ENCODE measurements at regions of chr18 and their contacts with region 1.

Region 1: DNA sequence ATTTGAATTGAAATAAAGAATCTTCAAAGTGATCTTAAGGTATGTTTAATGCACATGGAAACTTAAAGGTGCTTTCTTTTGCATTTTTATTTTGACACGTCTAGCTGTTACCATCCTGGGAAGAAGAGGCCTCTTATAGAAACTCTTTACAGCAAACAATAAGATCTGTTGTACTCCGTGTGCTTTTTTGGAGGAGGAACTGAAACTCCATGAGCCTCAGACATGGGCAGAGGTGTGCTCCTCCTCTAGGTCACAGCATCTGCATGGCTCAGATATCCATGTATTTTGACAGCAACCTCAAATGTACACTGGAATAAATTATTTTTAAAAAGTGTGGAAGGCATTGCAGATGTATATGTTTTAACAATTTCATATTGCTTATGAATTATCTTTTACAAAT is 783.3 kb upstream of the SALL3 start:
- DNase-seq: no peak
- ATAC-seq: no peak
- H3K4me3 ChIP-seq: no peak overlapping the region
- H3K27ac ChIP-seq: no peak overlapping the region
- H3K4me1 ChIP-seq: no peaks in the 10 kb centered on the region
- H3K27me3 ChIP-seq: no peaks in the 10 kb centered on the region
- CTCF ChIP-seq: no peak

Region 2: GRCh38 chr18:77679869-77680268 is 516.4 kb before region 1 on chr18:
- CTCF ChIA-PET with region 1: no interaction called
- POLR2A ChIA-PET with region 1: no interaction called
- in situ Hi-C with region 1: no loop called
- intact Hi-C with region 1: loop called (anchors 5 kb)
- DNase-seq: no peak
- ATAC-seq: no peak
- H3K4me3 ChIP-seq: no peak overlapping the region
- H3K27ac ChIP-seq: no peak overlapping the region
- H3K4me1 ChIP-seq: peaks cover 6% of the 10 kb centered on the region
- H3K27me3 ChIP-seq: peaks cover 10% of the 10 kb centered on the region; the same call in 1 of the 2 replicates
- CTCF ChIP-seq: no peak

Measured in Panc1 (cell line).